Right ventricle myocardium superior (tissue), 1 donor: ENCODE measurements at regions of chr19 and their contacts with region 1.

Region 1: GRCh38 chr19:51651216-51651846 is 4.7 kb upstream of the SIGLEC14 start:
- DNase-seq: no peak
- ATAC-seq: no peak

Region 2: DNA sequence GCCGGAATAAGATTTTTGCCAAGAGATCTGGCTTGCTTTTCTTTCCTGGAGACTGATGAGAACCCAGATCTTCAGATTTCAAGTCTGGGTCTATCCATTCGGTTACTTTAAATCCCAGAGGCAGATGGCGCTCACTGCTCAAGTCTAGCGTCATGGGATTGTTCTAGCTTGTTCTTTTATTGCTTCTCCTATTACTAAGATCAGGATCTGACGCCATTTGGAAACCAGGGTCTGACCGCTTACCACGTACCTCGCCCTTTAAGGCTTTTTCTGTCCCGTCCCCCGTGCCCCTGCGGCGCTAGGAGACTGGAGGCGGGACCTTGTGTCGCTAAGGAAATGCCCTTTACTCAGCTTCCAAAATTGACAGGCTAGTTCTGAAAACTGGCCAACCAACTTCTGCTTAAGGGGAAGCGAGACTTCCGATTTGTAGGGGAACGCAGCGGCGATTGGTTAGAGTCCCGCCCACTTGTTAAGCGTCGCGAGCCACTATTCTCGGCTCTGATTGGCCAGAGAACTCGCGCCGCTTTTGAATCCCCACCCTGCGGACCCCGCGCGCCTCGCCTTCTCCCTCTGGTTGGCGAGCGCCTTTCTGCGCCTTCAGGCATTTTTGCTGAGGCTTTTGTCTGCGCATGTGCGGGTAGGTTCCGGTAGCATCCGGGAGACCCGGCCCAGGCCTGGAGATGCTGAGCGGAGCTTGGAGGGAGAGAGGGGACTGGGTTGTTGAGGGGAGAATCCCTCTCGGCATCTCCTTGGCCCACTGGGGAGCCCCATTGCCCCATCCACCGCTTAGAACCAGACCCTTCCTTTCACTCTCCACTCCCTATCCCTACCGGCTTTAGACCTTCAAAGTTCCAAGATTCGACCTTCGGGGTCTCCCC is 257.1 kb before region 1 on chr19:
- intact Hi-C with region 1: loop called (anchors 10 kb)
- DNase-seq: peak; percentile 94
- ATAC-seq: peak; percentile 98

Region 3: GRCh38 chr19:51473009-51473707 is 178.2 kb before region 1 on chr19:
- intact Hi-C with region 1: loop called (anchors 5 kb)
- DNase-seq: peak; percentile 74
- ATAC-seq: peak; percentile 79

Region 4: DNA sequence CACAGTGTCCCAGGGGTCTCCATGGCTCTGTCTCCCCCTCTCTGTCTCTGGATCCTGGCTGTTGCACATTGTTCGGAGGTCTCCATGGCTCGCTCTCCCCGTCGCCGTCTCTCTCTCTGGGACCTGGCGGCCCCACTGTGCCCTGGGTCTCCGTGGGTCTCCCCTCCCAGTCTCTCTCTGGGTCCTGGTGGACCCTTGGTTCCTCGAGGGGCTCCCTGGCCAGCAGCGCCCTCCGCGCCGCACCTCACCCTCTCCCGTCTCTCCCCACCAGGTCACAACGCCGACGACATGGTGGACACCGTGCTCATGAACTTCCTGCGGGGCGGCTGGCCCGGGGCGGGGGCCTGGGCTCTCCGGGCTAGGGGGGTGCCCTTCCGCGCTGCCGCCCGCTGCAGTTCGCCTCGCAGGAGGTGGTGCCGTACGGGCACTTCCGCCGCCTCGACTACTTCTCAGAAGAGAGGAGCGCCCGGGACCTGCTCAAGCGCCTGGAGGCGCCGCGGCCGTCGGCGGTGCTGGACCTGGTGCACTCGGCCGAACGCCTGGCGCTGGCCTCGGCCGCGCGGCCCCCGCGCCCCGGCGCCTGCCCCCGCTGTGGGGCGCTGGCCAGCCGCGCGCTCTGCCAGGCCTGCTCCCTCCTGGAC is 50.3 kb before region 1 on chr19:
- intact Hi-C with region 1: no loop called
- DNase-seq: no peak
- ATAC-seq: no peak